ENCODE measurements at regions of chr12 and their contacts with region 1.

Region 1: GRCh38 chr12:41795910-41796309 is 348.8 kb downstream of the GXYLT1 start:
- DNase-seq: peak; percentile 5
- H3K4me3 ChIP-seq: no peak overlapping the region
- H3K27ac ChIP-seq: no peak overlapping the region
- H3K4me1 ChIP-seq: peaks cover 19% of the 10 kb centered on the region
- H3K27me3 ChIP-seq: no peaks in the 10 kb centered on the region
- CTCF ChIP-seq: peak; percentile 12 to 17
- POLR2A ChIP-seq: no peak

Region 2: GRCh38 chr12:41486718-41487117 is 309.2 kb before region 1 on chr12:
- CTCF ChIA-PET with region 1: no interaction called
- POLR2A ChIA-PET with region 1: no interaction called
- dilution Hi-C with region 1: no loop called
- intact Hi-C with region 1: loop called (anchors 1 kb)
- DNase-seq: no peak
- H3K4me3 ChIP-seq: no peak overlapping the region
- H3K27ac ChIP-seq: peak overlapping the region; percentile 71
- H3K4me1 ChIP-seq: peaks cover 24% of the 10 kb centered on the region
- H3K27me3 ChIP-seq: no peaks in the 10 kb centered on the region
- CTCF ChIP-seq: no peak
- POLR2A ChIP-seq: no peak

Region 3: DNA sequence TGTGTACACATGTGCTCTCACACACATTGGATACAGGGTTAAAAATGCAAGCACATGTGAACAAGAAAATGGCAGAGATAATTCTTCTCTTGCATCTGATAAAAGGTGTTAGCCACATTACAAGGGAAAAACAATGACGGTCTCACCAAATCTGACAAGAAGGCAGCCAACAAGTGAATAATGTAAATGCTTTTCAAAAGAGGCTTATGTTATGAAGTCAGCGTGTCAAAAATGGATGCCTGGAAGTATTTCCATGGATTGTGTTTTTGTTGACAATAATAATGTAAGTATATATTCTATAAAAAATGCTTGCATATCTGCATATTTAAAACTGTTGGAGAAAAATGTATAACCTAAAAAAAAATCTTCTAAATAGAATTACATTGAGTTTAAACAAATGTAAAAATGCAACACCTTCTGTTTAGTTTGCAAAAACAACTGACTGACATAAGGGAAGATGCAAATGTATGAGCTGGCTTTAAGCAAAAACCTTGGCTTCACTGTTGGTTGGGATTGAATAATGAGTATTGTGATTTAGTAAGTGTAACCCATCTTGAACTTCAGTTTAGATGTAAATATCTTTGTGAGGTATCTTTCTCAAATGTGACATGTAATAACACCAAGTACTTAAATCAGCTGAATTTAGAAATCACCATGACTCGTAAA is 182.9 kb before region 1 on chr12:
- CTCF ChIA-PET with region 1: no interaction called
- POLR2A ChIA-PET with region 1: no interaction called
- dilution Hi-C with region 1: no loop called
- intact Hi-C with region 1: no loop called
- DNase-seq: no peak
- H3K4me3 ChIP-seq: no peak overlapping the region
- H3K27ac ChIP-seq: no peak overlapping the region
- H3K4me1 ChIP-seq: no peaks in the 10 kb centered on the region
- H3K27me3 ChIP-seq: no peaks in the 10 kb centered on the region
- CTCF ChIP-seq: no peak
- POLR2A ChIP-seq: no peak

Region 4: GRCh38 chr12:41932470-41932991 is 136.6 kb after region 1 on chr12:
- CTCF ChIA-PET with region 1: no interaction called
- POLR2A ChIA-PET with region 1: no interaction called
- dilution Hi-C with region 1: no loop called
- intact Hi-C with region 1: loop called (anchors 2 kb)
- DNase-seq: peak; percentile 90
- H3K4me3 ChIP-seq: peak overlapping the region; percentile 25 to 46 (median 26)
- H3K27ac ChIP-seq: peak overlapping the region; percentile 61
- H3K4me1 ChIP-seq: peaks cover 13% of the 10 kb centered on the region
- H3K27me3 ChIP-seq: no peaks in the 10 kb centered on the region
- CTCF ChIP-seq: no peak
- POLR2A ChIP-seq: no peak

Region 5: GRCh38 chr12:42039176-42039575 is 243.3 kb after region 1 on chr12:
- CTCF ChIA-PET with region 1: no interaction called
- POLR2A ChIA-PET with region 1: no interaction called
- dilution Hi-C with region 1: no loop called
- intact Hi-C with region 1: no loop called
- DNase-seq: peak; percentile 34
- H3K4me3 ChIP-seq: no peak overlapping the region
- H3K27ac ChIP-seq: no peak overlapping the region
- H3K4me1 ChIP-seq: no peaks in the 10 kb centered on the region
- H3K27me3 ChIP-seq: no peaks in the 10 kb centered on the region
- CTCF ChIP-seq: no peak
- POLR2A ChIP-seq: no peak

Measured in endothelial cell of umbilical vein (primary cell).